Activated CD4-positive, alpha-beta T cell treated with anti-CD3 and anti-CD28 coated beads for 36 hours (primary cell): ENCODE measurements at regions of chr2 and their contacts with region 1.

Region 1: GRCh38 chr2:189661148-189661956 is at the start of gene ASNSD1:
- DNase-seq: peak; percentile 99
- ATAC-seq: peak; percentile 86
- H3K4me3 Mint-ChIP-seq: no peak within 1 kb of the TSS
- H3K27ac Mint-ChIP-seq: no peak within 1 kb of the TSS
- H3K4me1 Mint-ChIP-seq: peaks cover 46% of the 10 kb centered on the region
- H3K27me3 Mint-ChIP-seq: no peaks in the 10 kb centered on the region
- total RNA-seq, gene ASNSD1: 50.9 to 58.4 TPM

Region 2: GRCh38 chr2:189440947-189441708 is 220.2 kb before region 1 on chr2 and contains the start of gene WDR75:
- CTCF ChIA-PET with region 1: interaction called, 5 read pairs
- POLR2A ChIA-PET with region 1: interaction called, 3 read pairs
- intact Hi-C with region 1: loop called in 1 of 2 experiments (anchors 1 kb)
- DNase-seq: peak; percentile 95
- ATAC-seq: peak; percentile 91
- H3K4me3 Mint-ChIP-seq: no peak within 1 kb of the TSS
- H3K27ac Mint-ChIP-seq: peak within 1 kb of the TSS; percentile 99
- H3K4me1 Mint-ChIP-seq: peaks cover 20% of the 10 kb centered on the region
- H3K27me3 Mint-ChIP-seq: no peaks in the 10 kb centered on the region
- total RNA-seq, gene WDR75: 82.1 to 82.3 TPM

Region 3: DNA sequence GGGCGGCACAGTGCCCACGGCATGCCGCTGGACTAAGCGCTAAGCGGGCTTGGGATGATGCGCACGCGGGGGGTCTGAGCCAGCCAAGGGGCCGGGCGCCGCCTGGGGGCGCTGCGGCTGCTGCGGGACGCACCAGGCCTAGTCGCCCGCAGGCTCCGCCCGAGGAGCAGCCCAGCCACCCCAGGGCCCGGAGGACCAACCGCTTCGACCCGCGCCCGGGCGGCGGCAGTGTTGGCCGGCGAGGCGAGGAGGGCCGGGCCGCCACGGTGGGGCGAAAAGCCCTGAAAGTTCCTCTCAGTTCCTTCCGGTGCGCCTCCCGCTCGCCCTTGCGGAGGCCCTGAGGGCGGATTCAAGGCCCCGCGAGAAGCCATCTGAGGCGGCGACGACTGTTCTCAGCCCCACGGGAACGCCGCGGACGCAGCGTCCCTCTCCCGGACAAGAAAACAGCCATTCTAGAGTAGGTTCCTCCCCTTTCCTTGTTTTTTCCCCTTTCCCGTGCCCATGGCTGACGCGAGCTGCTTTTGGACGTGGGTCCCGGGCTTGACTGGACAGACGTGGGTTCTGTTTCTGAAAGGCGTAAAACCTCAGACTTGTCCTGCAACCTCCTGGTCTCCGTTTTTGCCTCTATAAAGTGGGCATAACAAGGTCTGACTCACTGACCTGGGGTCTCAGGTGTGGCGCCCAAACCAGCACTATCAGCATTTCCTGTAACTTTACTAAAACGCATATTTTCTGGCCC is 13.2 kb after region 1 on chr2 and contains the start of gene ANKAR:
- CTCF ChIA-PET with region 1: interaction called, 80 read pairs
- POLR2A ChIA-PET with region 1: interaction called, 12 read pairs
- intact Hi-C with region 1: loop called (anchors 1 kb)
- DNase-seq: peak; percentile 87
- ATAC-seq: peak; percentile 92
- H3K4me3 Mint-ChIP-seq: peak within 1 kb of the TSS; percentile 83
- H3K27ac Mint-ChIP-seq: peak within 1 kb of the TSS; percentile 95
- H3K4me1 Mint-ChIP-seq: peaks cover 27% of the 10 kb centered on the region
- H3K27me3 Mint-ChIP-seq: no peaks in the 10 kb centered on the region
- total RNA-seq, gene ANKAR: 2.5 to 2.7 TPM

Region 4: GRCh38 chr2:189751080-189751658 is 89.8 kb after region 1 on chr2:
- CTCF ChIA-PET with region 1: interaction called, 6 read pairs
- POLR2A ChIA-PET with region 1: interaction called, 3 read pairs
- intact Hi-C with region 1: loop called in 1 of 2 experiments (anchors 1 kb)
- DNase-seq: peak; percentile 57
- ATAC-seq: peak; percentile 71
- H3K4me3 Mint-ChIP-seq: no peak overlapping the region
- H3K27ac Mint-ChIP-seq: no peak overlapping the region
- H3K4me1 Mint-ChIP-seq: no peaks in the 10 kb centered on the region
- H3K27me3 Mint-ChIP-seq: no peaks in the 10 kb centered on the region

Region 5: GRCh38 chr2:189783927-189784867 is 122.8 kb after region 1 on chr2 and contains the starts of genes ORMDL1 and PMS1:
- CTCF ChIA-PET with region 1: interaction called, 4 read pairs
- POLR2A ChIA-PET with region 1: no interaction called
- intact Hi-C with region 1: loop called (anchors 1 kb)
- DNase-seq: peak; percentile 96
- ATAC-seq: peak; percentile 92
- H3K4me3 Mint-ChIP-seq: peak within 1 kb of the TSS; percentile 74
- H3K27ac Mint-ChIP-seq: peak within 1 kb of the TSS; percentile 94
- H3K4me1 Mint-ChIP-seq: peaks cover 52% of the 10 kb centered on the region
- H3K27me3 Mint-ChIP-seq: no peaks in the 10 kb centered on the region
- total RNA-seq, gene ORMDL1: 45.2 to 49.2 TPM
- total RNA-seq, gene PMS1: 45.8 to 47.4 TPM

Region 6: GRCh38 chr2:190005513-190005912 is 344.2 kb after region 1 on chr2:
- CTCF ChIA-PET with region 1: no interaction called
- POLR2A ChIA-PET with region 1: no interaction called
- intact Hi-C with region 1: no loop called
- DNase-seq: no peak
- ATAC-seq: no peak
- H3K4me3 Mint-ChIP-seq: no peak overlapping the region
- H3K27ac Mint-ChIP-seq: no peak overlapping the region
- H3K4me1 Mint-ChIP-seq: no peaks in the 10 kb centered on the region
- H3K27me3 Mint-ChIP-seq: peaks cover 2% of the 10 kb centered on the region

Region 7: DNA sequence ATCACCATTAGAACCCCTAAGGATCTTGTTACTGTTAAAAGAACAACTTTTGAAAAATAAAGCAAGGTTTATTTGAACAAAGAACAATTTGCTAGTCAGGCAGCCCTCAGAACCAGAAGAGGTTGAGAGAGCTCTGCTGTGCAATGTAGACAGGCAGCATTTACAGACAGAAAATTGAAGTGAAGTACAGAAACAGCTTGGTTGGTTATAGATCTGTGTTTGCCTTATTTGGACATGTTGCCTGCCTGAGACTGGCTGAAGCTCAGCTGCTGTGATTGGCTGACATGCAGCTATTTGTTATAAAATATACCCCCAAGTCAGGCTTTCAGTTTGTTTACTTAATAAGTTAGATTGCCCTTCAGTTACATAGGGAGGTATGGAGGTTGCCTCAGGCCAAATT is 388.7 kb after region 1 on chr2:
- CTCF ChIA-PET with region 1: no interaction called
- POLR2A ChIA-PET with region 1: no interaction called
- intact Hi-C with region 1: no loop called
- DNase-seq: no peak
- ATAC-seq: no peak
- H3K4me3 Mint-ChIP-seq: no peak overlapping the region
- H3K27ac Mint-ChIP-seq: no peak overlapping the region
- H3K4me1 Mint-ChIP-seq: no peaks in the 10 kb centered on the region
- H3K27me3 Mint-ChIP-seq: peaks cover 6% of the 10 kb centered on the region

Region 8: GRCh38 chr2:190319555-190320498 is 658.5 kb after region 1 on chr2 and contains the start of gene HIBCH:
- CTCF ChIA-PET with region 1: interaction called, 3 read pairs
- POLR2A ChIA-PET with region 1: no interaction called
- intact Hi-C with region 1: loop called in 1 of 2 experiments (anchors 10 kb)
- DNase-seq: peak; percentile 95
- ATAC-seq: peak; percentile 87
- H3K4me3 Mint-ChIP-seq: peak within 1 kb of the TSS; percentile 85
- H3K27ac Mint-ChIP-seq: peak within 1 kb of the TSS; percentile 93
- H3K4me1 Mint-ChIP-seq: peaks cover 59% of the 10 kb centered on the region
- H3K27me3 Mint-ChIP-seq: no peaks in the 10 kb centered on the region
- total RNA-seq, gene HIBCH: 23.1 to 23.7 TPM

Region 9: DNA sequence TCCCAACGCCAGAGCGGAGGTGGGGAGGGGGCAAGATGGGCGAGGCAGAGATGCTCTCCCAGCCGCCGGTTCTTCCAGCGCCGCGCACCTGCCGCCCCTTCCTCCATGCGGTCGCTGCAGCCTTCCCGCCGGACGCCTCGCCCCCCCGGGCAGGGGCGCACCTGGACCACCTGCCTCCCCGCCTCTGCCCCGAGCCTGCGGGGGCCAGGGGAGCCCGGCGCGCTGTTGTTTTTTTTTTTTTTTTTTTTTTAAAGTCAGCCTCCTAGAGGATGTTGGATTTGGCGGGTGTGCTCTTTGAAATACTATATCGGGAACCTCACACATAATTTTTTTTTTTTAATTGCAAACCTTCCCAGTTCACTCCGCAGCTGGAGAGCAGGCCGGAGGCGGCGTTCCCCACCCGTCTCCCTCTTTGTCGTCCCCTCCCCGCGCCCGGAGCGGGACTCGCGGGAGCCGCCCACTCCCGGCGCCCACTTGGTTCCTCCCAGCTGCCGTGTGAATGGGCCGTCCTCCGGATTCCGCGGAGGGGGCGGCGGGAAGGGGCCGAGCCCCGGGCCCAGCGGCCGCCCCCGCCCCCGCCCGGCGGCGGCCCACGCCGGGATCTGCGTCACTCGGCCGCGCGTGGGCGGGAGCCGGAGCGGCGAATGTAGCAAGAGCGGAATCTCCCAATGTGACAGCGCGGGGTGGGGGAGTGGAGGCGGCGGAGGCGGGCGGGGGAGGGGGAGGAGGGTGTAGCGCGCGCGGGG is 987.1 kb after region 1 on chr2:
- CTCF ChIA-PET with region 1: no interaction called
- POLR2A ChIA-PET with region 1: no interaction called
- intact Hi-C with region 1: loop called in 1 of 2 experiments (anchors 10 kb)
- DNase-seq: peak; percentile 88
- ATAC-seq: peak; percentile 54
- H3K4me3 Mint-ChIP-seq: peak overlapping the region; percentile 67
- H3K27ac Mint-ChIP-seq: peak overlapping the region; percentile 81
- H3K4me1 Mint-ChIP-seq: peaks cover 46% of the 10 kb centered on the region
- H3K27me3 Mint-ChIP-seq: no peaks in the 10 kb centered on the region